ENCODE measurements at regions of chr16 and their contacts with region 1.

Region 1: DNA sequence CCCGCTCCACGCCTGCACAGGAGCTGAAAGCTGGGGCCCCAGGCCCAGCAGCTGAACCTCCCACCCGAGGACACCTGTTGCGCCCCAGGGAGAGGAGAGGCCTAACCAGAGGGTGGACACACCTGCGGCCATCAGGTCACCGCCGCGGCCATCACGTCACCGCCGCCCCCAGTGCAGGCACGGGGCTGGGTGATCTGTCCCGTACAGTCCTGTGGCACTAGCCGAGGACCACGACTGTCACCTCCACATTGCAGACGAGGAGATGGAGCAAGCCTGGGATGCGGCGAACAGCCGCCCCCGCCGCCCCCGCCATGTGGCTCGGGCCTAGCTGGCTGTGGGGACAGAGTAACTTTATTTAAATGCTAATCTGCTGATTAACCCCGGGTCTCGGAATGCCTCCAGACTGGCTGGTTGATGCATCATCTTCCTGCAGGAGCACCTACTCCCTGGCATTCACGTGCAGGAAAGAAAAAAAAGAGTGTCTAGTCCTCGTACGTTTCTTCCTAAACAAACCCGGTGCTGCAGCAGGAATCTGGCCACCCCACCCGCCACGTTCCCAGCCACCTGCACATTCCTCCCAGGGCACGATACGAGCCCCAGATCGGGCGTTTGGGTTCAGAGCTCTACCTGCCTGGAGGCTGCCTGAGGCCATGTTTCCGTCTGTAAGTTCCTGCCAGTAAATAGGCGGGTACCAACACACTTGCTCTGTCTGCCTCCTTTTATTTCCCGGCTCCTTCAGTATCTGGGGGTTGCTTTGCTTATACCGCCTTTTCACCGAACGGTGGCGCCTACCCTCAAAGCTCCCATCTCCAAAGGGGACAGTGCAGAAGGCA is 29.9 kb downstream of the PIEZO1 start:
- DNase-seq: no peak
- H3K4me3 ChIP-seq: no peak overlapping the region
- H3K27me3 ChIP-seq: no peaks in the 10 kb centered on the region
- CTCF ChIP-seq: peak; percentile 63

Region 2: GRCh38 chr16:88743693-88744576 is 11.2 kb before region 1 on chr16:
- CTCF ChIA-PET with region 1: interaction called, 15 read pairs
- POLR2A ChIA-PET with region 1: no interaction called
- DNase-seq: no peak
- H3K4me3 ChIP-seq: no peak overlapping the region
- H3K27me3 ChIP-seq: no peaks in the 10 kb centered on the region
- CTCF ChIP-seq: peak; percentile 91

Region 3: DNA sequence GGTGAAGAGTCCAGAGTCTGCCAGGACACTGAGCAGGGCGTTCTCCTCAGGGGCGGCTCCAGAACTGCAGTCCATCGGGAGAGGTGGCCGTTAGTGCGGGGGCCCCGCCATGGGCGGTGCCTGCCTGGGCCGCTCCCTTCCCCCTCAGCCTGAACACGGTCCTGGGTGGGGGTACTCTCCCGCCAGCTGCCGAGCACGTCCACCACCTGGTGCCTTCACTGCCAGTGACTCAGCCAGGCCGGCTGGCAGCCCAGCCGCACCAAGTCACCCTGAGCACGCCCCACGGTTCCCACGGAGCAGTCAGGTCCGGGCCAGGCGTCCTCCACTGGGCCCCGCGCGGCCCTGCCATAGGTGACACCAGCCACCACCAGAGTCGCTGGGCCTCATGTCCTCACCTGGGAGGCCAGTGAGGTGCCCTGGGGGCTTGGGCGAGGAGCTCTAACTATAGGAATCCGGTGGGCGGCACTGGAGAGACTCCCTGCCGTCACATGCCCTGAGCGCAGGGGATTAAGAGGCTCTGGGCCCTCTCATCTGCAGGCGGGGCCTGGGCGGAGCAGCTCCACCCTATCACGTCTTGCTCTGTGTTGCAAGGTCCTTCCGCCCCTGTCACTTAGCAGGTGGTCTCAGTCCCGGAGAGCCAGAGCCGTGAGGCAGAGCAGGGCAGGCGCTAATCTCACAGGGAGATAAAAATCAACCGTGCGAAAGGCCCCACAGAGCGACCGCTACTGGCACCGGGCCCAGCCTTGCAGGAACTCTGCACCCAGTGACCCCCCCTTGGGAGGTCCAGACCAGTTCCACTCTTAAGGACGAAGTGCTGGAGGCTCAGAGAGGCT is 15.5 kb after region 1 on chr16:
- CTCF ChIA-PET with region 1: interaction called, 22 read pairs
- POLR2A ChIA-PET with region 1: no interaction called
- DNase-seq: no peak
- H3K4me3 ChIP-seq: no peak overlapping the region
- H3K27me3 ChIP-seq: no peaks in the 10 kb centered on the region
- CTCF ChIP-seq: no peak

Measured in BJ (cell line).